ENCODE measurements at regions of chr5 and their contacts with region 1.

Region 1: GRCh38 chr5:36739751-36740221 is 133.4 kb downstream of the SLC1A3 start:
- DNase-seq: peak; percentile 48 to 87 (median 75)
- ATAC-seq: peak in 1 of 2 donors; percentile 33
- H3K4me3 ChIP-seq: no peak overlapping the region
- H3K27ac ChIP-seq: no peak overlapping the region
- H3K4me1 ChIP-seq: peaks cover 5% of the 10 kb centered on the region
- H3K27me3 ChIP-seq: no peaks in the 10 kb centered on the region

Region 2: DNA sequence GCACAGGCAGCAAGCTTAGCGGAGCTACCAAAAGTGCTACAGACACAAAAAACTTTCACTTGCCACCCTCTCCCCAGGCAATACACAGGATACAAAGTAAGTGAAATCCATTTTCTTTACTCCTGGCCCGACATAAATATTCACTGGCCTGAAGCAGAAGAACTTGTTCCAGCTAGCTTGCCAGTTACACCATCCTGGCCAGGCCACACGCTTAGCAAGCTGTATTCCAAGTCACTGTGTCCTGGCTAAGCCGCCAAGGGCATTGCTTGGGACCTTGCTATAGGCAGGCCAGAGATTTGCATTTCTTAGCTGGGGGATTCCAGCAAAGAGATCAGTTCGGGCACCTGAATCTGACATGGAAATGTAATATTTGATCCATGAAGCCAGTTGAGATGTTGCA is 204.4 kb before region 1 on chr5:
- intact Hi-C with region 1: no loop called
- DNase-seq: peak in 2 of 3 donors; percentile 33 to 62
- ATAC-seq: peak; percentile 82 to 88
- H3K4me3 ChIP-seq: no peak overlapping the region
- H3K27ac ChIP-seq: peak overlapping the region; percentile 76
- H3K4me1 ChIP-seq: no peaks in the 10 kb centered on the region
- H3K27me3 ChIP-seq: no peaks in the 10 kb centered on the region

Region 3: DNA sequence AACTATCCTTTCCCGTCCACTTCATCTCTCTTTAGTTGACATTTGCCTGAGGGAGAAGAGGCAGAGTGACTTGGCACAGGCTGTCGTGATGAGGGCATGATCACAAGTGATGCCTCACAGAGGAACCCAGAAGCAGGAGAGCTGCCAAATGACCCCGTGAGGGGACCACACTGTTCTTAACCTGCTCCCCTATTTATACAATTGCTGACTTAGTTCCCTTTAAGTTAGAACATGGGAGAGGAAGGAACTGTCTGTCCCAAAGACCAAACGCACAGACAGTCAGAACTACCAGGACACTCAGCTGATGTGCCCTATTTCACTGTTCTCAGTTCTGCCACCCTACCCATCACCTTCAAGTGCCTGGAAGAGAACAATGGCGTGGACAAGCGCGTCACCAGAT is 59.7 kb before region 1 on chr5:
- intact Hi-C with region 1: no loop called
- DNase-seq: peak; percentile 63 to 88 (median 75)
- ATAC-seq: peak; percentile 76 to 77
- H3K4me3 ChIP-seq: no peak overlapping the region
- H3K27ac ChIP-seq: peak overlapping the region; percentile 61
- H3K4me1 ChIP-seq: no peaks in the 10 kb centered on the region
- H3K27me3 ChIP-seq: no peaks in the 10 kb centered on the region

Region 4: GRCh38 chr5:36763454-36763853 is 23.7 kb after region 1 on chr5:
- intact Hi-C with region 1: no loop called
- DNase-seq: no peak
- ATAC-seq: no peak
- H3K4me3 ChIP-seq: no peak overlapping the region
- H3K27ac ChIP-seq: no peak overlapping the region
- H3K4me1 ChIP-seq: no peaks in the 10 kb centered on the region
- H3K27me3 ChIP-seq: no peaks in the 10 kb centered on the region

Region 5: GRCh38 chr5:36870399-36871040 is 130.7 kb after region 1 on chr5:
- intact Hi-C with region 1: loop called in 3 of 4 experiments (anchors 5 to 10 kb)
- DNase-seq: no peak
- ATAC-seq: peak; percentile 68 to 76
- H3K4me3 ChIP-seq: no peak overlapping the region
- H3K27ac ChIP-seq: no peak overlapping the region
- H3K4me1 ChIP-seq: no peaks in the 10 kb centered on the region
- H3K27me3 ChIP-seq: no peaks in the 10 kb centered on the region

Region 6: DNA sequence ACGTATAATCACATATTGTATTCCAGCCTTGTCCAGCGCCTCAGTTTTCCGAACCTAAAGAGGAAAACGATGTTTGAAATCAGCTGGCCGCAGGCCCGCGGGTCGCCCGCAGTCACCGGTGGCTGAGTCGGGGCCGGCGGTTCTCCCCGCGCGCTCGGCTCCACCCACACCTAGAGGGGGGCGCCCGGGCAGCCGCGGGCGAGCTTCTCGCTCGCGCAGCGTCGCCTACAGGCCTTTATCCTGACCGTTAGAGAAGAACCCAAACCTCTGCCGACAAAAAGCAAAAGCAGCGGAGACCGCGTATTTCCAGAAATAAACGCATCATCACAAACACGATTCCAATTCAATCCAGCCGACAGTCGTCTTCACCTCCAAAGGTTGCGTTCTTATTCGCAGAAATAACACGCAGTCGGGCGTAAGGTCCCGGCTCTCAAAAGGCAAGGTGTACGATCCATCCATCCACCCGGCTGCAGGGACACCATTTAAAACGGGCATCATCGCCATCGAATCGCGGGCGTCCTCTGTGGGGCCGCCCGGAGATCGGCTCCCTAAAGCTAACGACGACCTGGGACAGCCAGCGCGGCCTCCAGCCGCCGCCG is 136.1 kb after region 1 on chr5:
- intact Hi-C with region 1: loop called in 2 of 4 experiments (anchors 5 to 10 kb)
- DNase-seq: peak; percentile 83 to 93 (median 92)
- ATAC-seq: peak; percentile 92
- H3K4me3 ChIP-seq: peak overlapping the region; percentile 96
- H3K27ac ChIP-seq: peak overlapping the region; percentile 92
- H3K4me1 ChIP-seq: no peaks in the 10 kb centered on the region
- H3K27me3 ChIP-seq: no peaks in the 10 kb centered on the region

Region 7: DNA sequence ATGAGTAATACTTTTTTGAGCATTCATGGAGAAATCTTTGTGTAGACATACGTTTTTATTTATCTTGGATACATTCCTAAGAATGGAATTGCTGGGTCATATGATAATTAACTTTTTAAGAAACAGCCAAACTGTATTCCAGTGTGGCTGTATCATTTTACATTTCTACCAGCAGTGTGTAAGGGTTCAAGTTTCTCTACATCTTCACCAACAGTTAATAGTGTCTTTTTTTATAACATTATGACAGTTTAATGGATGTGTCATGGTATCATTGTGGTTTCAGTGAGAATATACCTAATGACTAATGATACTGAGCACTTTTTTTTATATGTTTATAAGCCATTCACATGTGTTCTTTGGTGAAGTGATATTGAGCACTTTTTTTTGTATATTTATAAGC is 189.2 kb after region 1 on chr5:
- intact Hi-C with region 1: no loop called
- DNase-seq: no peak
- ATAC-seq: no peak
- H3K4me3 ChIP-seq: no peak overlapping the region
- H3K27ac ChIP-seq: no peak overlapping the region
- H3K4me1 ChIP-seq: peaks cover 3% of the 10 kb centered on the region
- H3K27me3 ChIP-seq: no peaks in the 10 kb centered on the region

Region 8: DNA sequence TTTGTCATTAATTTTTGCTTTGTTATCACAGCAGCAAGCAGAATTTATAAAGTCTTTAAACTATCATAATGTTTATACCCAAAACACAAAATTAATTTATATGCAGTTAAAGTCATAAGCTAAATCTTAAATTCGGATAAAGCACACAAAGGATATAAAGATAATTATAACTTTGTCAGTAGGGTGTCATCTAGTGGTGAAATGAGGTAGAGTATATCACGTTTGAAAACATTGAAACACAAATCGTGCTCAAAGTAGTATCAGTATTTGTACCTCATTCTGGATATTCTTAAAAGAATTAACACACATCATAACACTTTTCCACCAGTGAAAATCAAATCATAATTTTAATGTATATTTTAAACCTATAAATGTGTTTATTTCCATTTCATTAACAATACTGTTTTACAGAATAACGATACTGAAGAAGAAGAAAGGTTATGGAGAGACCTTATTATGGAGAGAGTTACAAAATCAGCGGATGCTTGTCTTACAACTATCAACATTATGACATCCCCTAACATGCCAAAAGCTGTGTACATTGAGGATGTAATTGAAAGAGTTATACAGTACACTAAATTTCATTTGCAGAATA is 266.3 kb after region 1 on chr5:
- intact Hi-C with region 1: loop called in 3 of 4 experiments (anchors 5 to 10 kb)
- DNase-seq: no peak
- ATAC-seq: no peak
- H3K4me3 ChIP-seq: no peak overlapping the region
- H3K27ac ChIP-seq: no peak overlapping the region
- H3K4me1 ChIP-seq: no peaks in the 10 kb centered on the region
- H3K27me3 ChIP-seq: no peaks in the 10 kb centered on the region